CD14-positive monocyte (primary cell): ENCODE measurements at regions of chr6 and their contacts with region 1.

Region 1: DNA sequence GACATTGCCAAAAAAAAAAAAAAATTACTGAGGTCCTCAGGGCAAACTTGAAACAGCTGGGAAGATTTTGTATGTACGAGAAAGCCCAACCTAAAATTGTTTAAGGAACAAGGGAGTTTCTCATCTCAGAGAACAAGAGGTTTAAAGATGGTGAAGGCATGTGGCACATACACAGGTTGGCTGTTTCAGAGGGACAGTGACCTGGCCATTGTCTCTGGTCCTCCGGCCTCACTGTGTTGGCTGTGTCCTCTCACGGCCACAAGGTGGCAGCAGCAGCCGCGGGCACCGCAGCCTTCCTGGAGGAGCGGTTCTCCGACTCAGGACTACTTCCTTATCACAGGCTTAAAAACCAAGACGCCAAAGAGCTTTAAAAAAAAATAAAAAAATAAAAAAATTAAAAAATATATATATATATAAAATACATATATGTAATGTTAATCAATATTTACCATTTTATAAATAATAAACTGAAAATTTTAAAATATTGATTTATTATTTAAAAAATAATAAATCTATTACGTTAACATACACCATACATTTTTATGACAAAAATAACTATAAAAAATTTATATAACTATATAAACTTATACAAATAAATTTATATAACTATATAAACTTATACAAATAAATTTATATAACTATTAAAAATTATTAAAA is 52.8 kb downstream of the GTF2H5 start:
- DNase-seq: peak; percentile 83 to 87 (median 87)
- H3K4me3 ChIP-seq: no peak overlapping the region
- H3K4me3 Mint-ChIP-seq: no peak overlapping the region
- H3K27ac ChIP-seq: no peak overlapping the region
- H3K27ac Mint-ChIP-seq: peak overlapping the region in 6 of 7 donors; percentile 15 to 82 (median 65)
- H3K4me1 ChIP-seq: peaks cover 20 to 26% of the 10 kb centered on the region in 2 donors
- H3K4me1 Mint-ChIP-seq: peaks cover 15% of the 10 kb centered on the region
- H3K27me3 ChIP-seq: no peaks in the 10 kb centered on the region
- H3K27me3 Mint-ChIP-seq: peaks cover 6 to 12% (median 7%) of the 10 kb centered on the region in 3 donors
- CTCF ChIP-seq: peak; percentile 93

Region 2: GRCh38 chr6:158599635-158600034 is 378.7 kb after region 1 on chr6:
- intact Hi-C with region 1: loop called (anchors 5 to 10 kb)
- DNase-seq: no peak
- H3K4me3 ChIP-seq: no peak overlapping the region
- H3K4me3 Mint-ChIP-seq: no peak overlapping the region
- H3K27ac ChIP-seq: no peak overlapping the region
- H3K27ac Mint-ChIP-seq: peak overlapping the region in 3 of 7 donors; percentile 1 to 66 (median 52)
- H3K4me1 ChIP-seq: no peaks in the 10 kb centered on the region
- H3K4me1 Mint-ChIP-seq: no peaks in the 10 kb centered on the region
- H3K27me3 ChIP-seq: no peaks in the 10 kb centered on the region
- H3K27me3 Mint-ChIP-seq: peaks cover 0 to 1% (median 0%) of the 10 kb centered on the region in 3 donors
- CTCF ChIP-seq: no peak